IMR-90 (cell line): ENCODE measurements at regions of chr7 and their contacts with region 1.

Region 1: DNA sequence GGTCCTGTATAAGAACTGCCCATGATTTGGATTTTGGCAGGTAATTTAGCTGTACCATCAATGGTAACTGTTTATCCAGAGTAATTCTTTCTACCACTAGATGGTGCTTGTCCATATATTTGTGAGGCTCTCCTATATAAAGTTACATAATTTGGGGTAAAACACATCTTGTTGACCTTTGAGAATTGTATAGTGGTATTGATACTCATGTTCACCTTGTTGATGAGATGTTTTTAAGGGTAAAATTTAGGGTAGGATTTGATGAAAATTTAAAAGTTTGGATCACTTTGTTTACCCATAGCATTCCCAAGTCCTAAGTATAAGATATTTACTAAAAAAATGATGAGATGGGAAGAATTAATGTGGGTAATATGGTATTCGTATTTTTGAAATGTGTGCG is 31.6 kb downstream of the ST7 start:
- DNase-seq: peak; percentile 28
- ATAC-seq: peak; percentile 52
- H3K4me3 ChIP-seq: no peak overlapping the region
- H3K27ac ChIP-seq: no peak overlapping the region
- H3K4me1 ChIP-seq: peaks cover 2% of the 10 kb centered on the region
- H3K27me3 ChIP-seq: no peaks in the 10 kb centered on the region
- CTCF ChIP-seq: peak; percentile 66
- POLR2A ChIP-seq: no peak
- RAD21 ChIP-seq: peak; percentile 59

Region 2: GRCh38 chr7:116809636-116810266 is 175.2 kb before region 1 on chr7:
- CTCF ChIA-PET with region 1: no interaction called
- POLR2A ChIA-PET with region 1: no interaction called
- dilution Hi-C with region 1: no loop called
- in situ Hi-C with region 1: no loop called
- intact Hi-C with region 1: no loop called
- DNase-seq: peak; percentile 77
- ATAC-seq: peak; percentile 88
- H3K4me3 ChIP-seq: no peak overlapping the region
- H3K27ac ChIP-seq: no peak overlapping the region
- H3K4me1 ChIP-seq: peaks cover 6% of the 10 kb centered on the region
- H3K27me3 ChIP-seq: no peaks in the 10 kb centered on the region
- CTCF ChIP-seq: peak; percentile 79
- POLR2A ChIP-seq: no peak
- RAD21 ChIP-seq: peak; percentile 93

Region 3: DNA sequence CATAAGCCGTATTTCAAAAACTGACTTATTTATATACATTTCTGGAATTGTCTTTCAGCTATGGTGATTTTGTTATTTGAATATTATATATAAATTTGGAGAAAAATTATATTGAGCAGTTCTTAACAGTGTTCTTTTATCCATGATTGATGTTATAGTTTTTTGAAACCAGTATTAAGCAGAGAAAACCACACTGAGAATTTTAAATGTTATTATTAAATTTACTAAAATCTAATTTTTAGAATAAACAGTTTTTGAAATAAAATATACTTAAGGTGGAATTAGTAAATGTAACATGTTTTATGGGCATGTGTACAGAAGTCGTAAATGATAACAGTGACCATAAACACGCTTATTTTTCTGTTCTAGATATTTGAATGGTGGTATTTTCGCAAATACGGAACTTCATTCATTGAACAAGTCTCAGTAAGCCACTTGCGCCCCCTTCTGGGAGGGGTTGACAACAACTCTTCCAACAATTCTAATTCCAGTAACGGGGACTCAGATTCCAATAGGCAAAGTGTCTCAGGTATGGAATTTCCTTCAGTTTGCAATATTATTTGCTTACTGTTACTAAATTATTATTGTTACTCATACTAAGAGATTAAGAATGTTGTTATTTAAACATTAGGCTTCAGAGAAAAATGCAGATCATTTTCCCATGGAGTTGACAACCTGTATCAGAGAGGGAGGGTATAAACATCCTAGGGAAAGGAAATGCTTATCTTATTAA is 134.4 kb after region 1 on chr7:
- CTCF ChIA-PET with region 1: interaction called, 6 read pairs
- POLR2A ChIA-PET with region 1: interaction called, 3 read pairs
- dilution Hi-C with region 1: no loop called
- in situ Hi-C with region 1: loop called (anchors 5 kb)
- intact Hi-C with region 1: loop called (anchors 1 kb)
- DNase-seq: peak; percentile 81
- ATAC-seq: peak; percentile 75
- H3K4me3 ChIP-seq: no peak overlapping the region
- H3K27ac ChIP-seq: no peak overlapping the region
- H3K4me1 ChIP-seq: peaks cover 3% of the 10 kb centered on the region
- H3K27me3 ChIP-seq: no peaks in the 10 kb centered on the region
- CTCF ChIP-seq: peak; percentile 93
- POLR2A ChIP-seq: 0 out of 2 replicates have a peak, but pooled peaks have one; percentile 37
- RAD21 ChIP-seq: peak; percentile 95

Region 4: GRCh38 chr7:117127585-117128168 is 142.8 kb after region 1 on chr7:
- CTCF ChIA-PET with region 1: interaction called, 11 read pairs
- POLR2A ChIA-PET with region 1: no interaction called
- dilution Hi-C with region 1: no loop called
- in situ Hi-C with region 1: no loop called
- intact Hi-C with region 1: no loop called
- DNase-seq: peak; percentile 72
- ATAC-seq: no peak
- H3K4me3 ChIP-seq: no peak overlapping the region
- H3K27ac ChIP-seq: no peak overlapping the region
- H3K4me1 ChIP-seq: peaks cover 12% of the 10 kb centered on the region
- H3K27me3 ChIP-seq: no peaks in the 10 kb centered on the region
- CTCF ChIP-seq: peak; percentile 75
- POLR2A ChIP-seq: no peak
- RAD21 ChIP-seq: peak; percentile 59